Endothelial cell of umbilical vein (primary cell): ENCODE measurements at regions of chr2 and their contacts with region 1.

Region 1: DNA sequence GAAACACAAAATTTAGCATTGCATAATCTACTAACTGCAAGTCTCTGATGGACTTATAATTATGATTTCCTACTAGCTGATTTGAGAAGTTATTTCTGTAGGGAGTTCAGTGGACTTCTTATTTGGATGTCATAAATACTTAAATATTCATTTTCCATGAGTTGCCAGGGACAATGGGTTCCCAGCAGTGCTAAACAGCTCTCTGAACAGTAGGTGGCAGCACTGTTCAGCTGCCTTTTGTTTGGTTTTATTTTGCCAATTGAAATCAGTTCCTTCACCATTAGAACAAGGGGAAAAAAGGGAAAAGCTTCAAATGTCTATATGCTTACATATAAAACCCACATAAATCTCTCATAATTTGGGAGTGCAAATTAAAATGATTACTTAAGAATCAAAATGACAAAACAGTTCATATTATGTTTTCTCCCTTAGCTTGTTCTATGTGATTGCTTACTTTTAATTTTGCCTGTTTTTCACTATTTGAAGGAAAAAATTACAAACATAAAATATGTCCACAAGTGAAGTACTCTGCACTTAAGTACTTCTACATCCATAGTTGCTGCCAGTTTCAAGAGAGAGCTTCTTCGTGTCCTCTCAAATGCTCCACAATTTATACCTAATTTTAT is 898.9 kb downstream of the CPS1 start:
- DNase-seq: peak; percentile 63
- H3K4me3 ChIP-seq: no peak overlapping the region
- H3K27ac ChIP-seq: no peak overlapping the region
- H3K4me1 ChIP-seq: no peaks in the 10 kb centered on the region
- H3K27me3 ChIP-seq: no peaks in the 10 kb centered on the region
- CTCF ChIP-seq: peak; percentile 78 to 83
- POLR2A ChIP-seq: no peak

Region 2: GRCh38 chr2:211512806-211513205 is 57.5 kb after region 1 on chr2:
- CTCF ChIA-PET with region 1: no interaction called
- POLR2A ChIA-PET with region 1: no interaction called
- dilution Hi-C with region 1: no loop called
- intact Hi-C with region 1: no loop called
- DNase-seq: no peak
- H3K4me3 ChIP-seq: no peak overlapping the region
- H3K27ac ChIP-seq: no peak overlapping the region
- H3K4me1 ChIP-seq: no peaks in the 10 kb centered on the region
- H3K27me3 ChIP-seq: no peaks in the 10 kb centered on the region
- CTCF ChIP-seq: no peak
- POLR2A ChIP-seq: no peak

Region 3: DNA sequence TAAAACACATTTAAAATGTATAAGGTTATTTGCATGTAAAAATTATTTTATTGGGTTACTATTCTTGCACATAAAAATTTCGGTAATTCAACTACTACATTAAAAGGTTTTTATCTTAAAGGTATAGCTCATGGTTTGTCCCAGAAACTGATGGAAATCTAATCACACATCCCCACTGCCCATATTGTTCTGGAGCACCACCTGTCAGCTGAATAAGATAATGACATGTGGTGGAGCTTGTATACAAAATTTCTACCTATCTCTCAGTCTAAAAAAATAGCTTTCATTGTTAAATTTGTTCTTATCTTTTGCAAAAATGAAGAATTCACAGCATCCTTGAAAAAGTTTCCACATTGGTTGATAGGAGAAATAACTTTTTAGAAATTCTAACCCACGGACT is 1065.0 kb after region 1 on chr2:
- CTCF ChIA-PET with region 1: interaction called, 10 read pairs
- POLR2A ChIA-PET with region 1: no interaction called
- dilution Hi-C with region 1: no loop called
- intact Hi-C with region 1: no loop called
- DNase-seq: peak; percentile 13
- H3K4me3 ChIP-seq: no peak overlapping the region
- H3K27ac ChIP-seq: no peak overlapping the region
- H3K4me1 ChIP-seq: no peaks in the 10 kb centered on the region
- H3K27me3 ChIP-seq: no peaks in the 10 kb centered on the region
- CTCF ChIP-seq: no peak
- POLR2A ChIP-seq: no peak

Region 4: GRCh38 chr2:212536817-212537725 is 1081.7 kb after region 1 on chr2:
- CTCF ChIA-PET with region 1: interaction called, 10 read pairs
- POLR2A ChIA-PET with region 1: no interaction called
- dilution Hi-C with region 1: no loop called
- intact Hi-C with region 1: no loop called
- DNase-seq: peak; percentile 20
- H3K4me3 ChIP-seq: peak overlapping the region; percentile 39 to 88 (median 86)
- H3K27ac ChIP-seq: no peak overlapping the region
- H3K4me1 ChIP-seq: peaks cover 18% of the 10 kb centered on the region
- H3K27me3 ChIP-seq: peaks cover 14 to 31% of the 10 kb centered on the region in 2 experiments
- CTCF ChIP-seq: no peak
- POLR2A ChIP-seq: no peak

Region 5: DNA sequence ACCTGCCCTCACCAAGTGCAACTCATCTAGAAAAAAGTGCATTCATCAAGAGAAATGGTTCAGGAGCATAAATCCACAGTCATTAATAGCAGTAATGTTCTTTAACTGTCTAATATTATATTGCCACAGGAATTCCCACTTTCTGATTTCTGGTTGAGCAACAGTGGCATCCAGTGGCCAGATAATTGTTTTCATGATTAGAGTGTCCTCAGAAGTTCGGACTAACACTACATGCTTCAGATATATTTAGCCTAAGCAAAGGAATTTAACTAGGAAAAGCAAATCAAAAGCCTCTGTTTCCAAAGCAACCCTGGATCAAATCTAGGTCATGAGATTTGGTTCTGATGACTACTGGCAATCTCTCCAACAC is 1093.1 kb after region 1 on chr2:
- CTCF ChIA-PET with region 1: interaction called, 31 read pairs
- POLR2A ChIA-PET with region 1: no interaction called
- dilution Hi-C with region 1: no loop called
- intact Hi-C with region 1: loop called (anchors 1 kb)
- DNase-seq: peak; percentile 54
- H3K4me3 ChIP-seq: no peak overlapping the region
- H3K27ac ChIP-seq: no peak overlapping the region
- H3K4me1 ChIP-seq: no peaks in the 10 kb centered on the region
- H3K27me3 ChIP-seq: no peaks in the 10 kb centered on the region
- CTCF ChIP-seq: peak; percentile 12 to 13
- POLR2A ChIP-seq: no peak